ENCODE measurements at regions of chr9 and their contacts with region 1.

Region 1: DNA sequence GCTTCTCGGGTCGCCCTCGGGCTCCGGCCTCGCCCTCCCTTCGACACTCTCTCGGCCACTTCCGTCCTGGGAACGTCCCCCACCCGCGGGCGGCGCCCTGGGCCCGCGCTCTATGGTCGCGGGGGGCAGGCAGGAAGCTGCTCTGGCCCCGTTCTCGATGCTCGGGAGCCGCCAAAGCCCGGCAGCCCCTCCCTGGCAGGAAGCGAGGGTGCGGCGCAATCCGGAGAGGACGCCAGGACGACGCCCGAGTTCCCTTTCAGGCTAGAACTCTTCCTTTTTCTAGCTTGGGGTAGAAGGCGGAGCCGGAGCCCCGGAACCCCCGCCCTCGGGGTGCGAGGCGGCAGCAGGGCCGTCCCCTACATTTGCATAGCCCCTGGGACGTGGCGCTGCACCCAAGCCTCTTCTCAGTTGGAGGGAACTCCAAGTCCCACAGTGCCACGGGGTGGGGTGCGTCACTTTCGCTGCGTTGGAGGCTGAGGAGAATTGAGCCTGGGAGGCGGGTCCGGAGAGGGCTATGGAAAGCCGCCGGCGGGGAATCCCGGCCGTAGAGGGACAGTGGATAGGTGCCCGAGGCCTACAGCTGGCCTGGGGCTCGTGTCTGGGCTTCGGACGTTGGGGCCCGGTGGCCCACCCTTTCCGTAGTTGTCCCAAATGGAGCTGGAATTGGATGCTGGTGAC is at the starts of genes CREB3 and TLN1:
- DNase-seq: peak; percentile 96
- H3K4me3 ChIP-seq: peak within 1 kb of the TSS; percentile 87
- CTCF ChIP-seq: peak; percentile 44

Region 2: DNA sequence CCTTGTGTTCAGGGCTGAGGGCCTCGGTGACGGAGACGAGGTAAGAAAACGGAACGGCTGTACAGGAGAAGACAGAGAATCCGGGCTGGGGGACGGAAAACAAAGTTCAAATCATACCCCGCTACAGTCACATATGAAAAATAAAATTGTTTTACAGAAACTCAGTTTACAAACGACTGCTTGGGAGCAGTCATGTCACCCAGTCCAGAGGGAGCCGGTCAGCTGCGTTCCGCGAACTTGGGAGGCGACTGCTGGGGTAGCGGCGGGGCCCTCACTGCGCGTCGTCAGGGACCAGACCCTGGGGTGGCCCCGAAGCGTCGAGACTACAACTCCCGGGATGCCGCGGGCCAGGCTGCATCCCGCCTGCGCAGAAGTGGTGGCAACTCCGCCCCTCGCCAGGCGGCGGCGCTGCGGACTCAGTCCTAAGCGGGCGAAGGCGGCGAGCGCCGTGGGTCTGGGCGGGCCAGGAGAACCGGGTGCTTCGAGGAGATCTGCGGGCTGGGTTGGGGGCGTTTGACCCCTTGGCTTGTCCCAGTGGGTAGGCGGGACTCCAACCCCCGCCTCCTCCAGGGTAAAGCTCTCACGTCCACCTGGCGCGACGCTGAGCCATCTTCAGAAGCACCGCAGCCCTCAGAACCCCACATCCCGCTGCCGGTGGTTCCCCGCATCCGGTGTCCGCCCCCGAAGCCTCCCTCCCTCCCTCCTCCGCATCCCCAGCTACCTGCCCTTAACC is 85.6 kb before region 1 on chr9:
- CTCF ChIA-PET with region 1: interaction called, 13 read pairs
- POLR2A ChIA-PET with region 1: interaction called, 6 read pairs
- DNase-seq: no peak
- H3K4me3 ChIP-seq: peak overlapping the region; percentile 74
- CTCF ChIP-seq: peak; percentile 99

Region 3: GRCh38 chr9:35664531-35665470 is 67.5 kb before region 1 on chr9 and contains the start of gene ARHGEF39:
- CTCF ChIA-PET with region 1: interaction called, 74 read pairs
- POLR2A ChIA-PET with region 1: interaction called, 9 read pairs
- DNase-seq: no peak
- H3K4me3 ChIP-seq: peak within 1 kb of the TSS; percentile 71
- CTCF ChIP-seq: peak; percentile 31

Region 4: DNA sequence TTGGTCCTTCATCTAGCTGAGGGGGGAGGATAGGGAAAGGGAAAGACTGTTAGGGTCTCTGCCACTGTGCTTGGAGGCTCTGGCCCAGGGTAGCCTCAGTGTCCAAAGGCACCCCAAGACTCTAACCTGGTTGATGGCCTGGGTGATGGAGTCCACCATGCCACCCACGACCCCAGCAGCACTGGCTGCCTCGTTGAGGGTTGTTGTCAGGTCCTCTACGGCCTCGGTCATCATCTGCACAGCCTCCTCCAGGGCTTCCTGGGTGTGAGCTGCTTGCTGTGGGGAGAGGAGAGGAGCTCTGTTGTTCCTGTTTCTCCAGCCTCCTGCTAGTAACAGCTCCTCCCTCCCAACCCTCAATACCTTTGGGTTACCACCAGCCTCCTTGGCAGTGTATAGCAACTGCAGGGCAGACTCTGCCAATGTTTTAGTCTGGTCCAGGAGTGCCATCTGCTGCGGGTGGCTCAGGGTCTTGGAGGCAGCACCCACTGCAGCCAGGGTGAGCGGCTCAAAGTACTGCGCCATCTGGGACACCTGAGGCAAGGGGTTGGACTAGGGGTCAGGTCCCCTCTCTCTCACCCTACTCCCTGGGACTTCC is 26.3 kb before region 1 on chr9:
- CTCF ChIA-PET with region 1: interaction called, 816 read pairs
- POLR2A ChIA-PET with region 1: interaction called, 21 read pairs
- DNase-seq: no peak
- H3K4me3 ChIP-seq: no peak overlapping the region
- CTCF ChIP-seq: no peak

Region 5: GRCh38 chr9:35748858-35749514 is 16.7 kb after region 1 on chr9 and contains the starts of genes GBA2 and RGP1:
- CTCF ChIA-PET with region 1: interaction called, 130 read pairs
- POLR2A ChIA-PET with region 1: interaction called, 54 read pairs
- DNase-seq: no peak
- H3K4me3 ChIP-seq: peak within 1 kb of the TSS; percentile 89
- CTCF ChIP-seq: no peak

Measured in AG04449 (cell line).